ENCODE measurements at regions of chr9 and their contacts with region 1.

Region 1: GRCh38 chr9:89000973-89001916 is 10.0 kb downstream of the S1PR3 start:
- DNase-seq: peak; percentile 82 to 93 (median 90)
- ATAC-seq: peak; percentile 82 to 92 (median 90)
- H3K4me3 ChIP-seq: peak overlapping the region in 1 of 4 donors; percentile 5
- H3K27ac ChIP-seq: no peak overlapping the region
- H3K4me1 ChIP-seq: peaks cover 0 to 14% (median 8%) of the 10 kb centered on the region in 3 donors
- H3K27me3 ChIP-seq: no peaks in the 10 kb centered on the region
- CTCF ChIP-seq: peak; percentile 45 to 74 (median 58)

Region 2: GRCh38 chr9:88236531-88237478 is 764.4 kb before region 1 on chr9:
- intact Hi-C with region 1: no loop called
- DNase-seq: peak in 1 of 6 donors; percentile 32
- ATAC-seq: peak; percentile 67 to 86 (median 76)
- H3K4me3 ChIP-seq: no peak overlapping the region
- H3K27ac ChIP-seq: peak overlapping the region; percentile 15 to 62 (median 54)
- H3K4me1 ChIP-seq: no peaks in the 10 kb centered on the region
- H3K27me3 ChIP-seq: no peaks in the 10 kb centered on the region
- CTCF ChIP-seq: no peak

Region 3: GRCh38 chr9:88593537-88594185 is 407.6 kb before region 1 on chr9:
- intact Hi-C with region 1: loop called in 2 of 3 experiments (anchors 5 kb)
- DNase-seq: peak in 3 of 6 donors; percentile 30 to 56 (median 35)
- ATAC-seq: peak; percentile 72 to 89 (median 86)
- H3K4me3 ChIP-seq: no peak overlapping the region
- H3K27ac ChIP-seq: no peak overlapping the region
- H3K4me1 ChIP-seq: no peaks in the 10 kb centered on the region
- H3K27me3 ChIP-seq: no peaks in the 10 kb centered on the region
- CTCF ChIP-seq: peak; percentile 16 to 65 (median 62)